Activated T-helper 1 cell treated with anti-CD3 and anti-CD28 coated beads, Interleukin-12 subunit alpha, Interleukin-12 subunit beta, Interleukin-2, Interleukin-4 antibody, amounts not matched to agents 30 ng/mL and 10 ng/mL and 1 ng/mL, durations not matched to agents 14 hours and 24 hours and 36 hours (primary cell): ENCODE measurements at regions of chr11 and their contacts with region 1.

Region 1: DNA sequence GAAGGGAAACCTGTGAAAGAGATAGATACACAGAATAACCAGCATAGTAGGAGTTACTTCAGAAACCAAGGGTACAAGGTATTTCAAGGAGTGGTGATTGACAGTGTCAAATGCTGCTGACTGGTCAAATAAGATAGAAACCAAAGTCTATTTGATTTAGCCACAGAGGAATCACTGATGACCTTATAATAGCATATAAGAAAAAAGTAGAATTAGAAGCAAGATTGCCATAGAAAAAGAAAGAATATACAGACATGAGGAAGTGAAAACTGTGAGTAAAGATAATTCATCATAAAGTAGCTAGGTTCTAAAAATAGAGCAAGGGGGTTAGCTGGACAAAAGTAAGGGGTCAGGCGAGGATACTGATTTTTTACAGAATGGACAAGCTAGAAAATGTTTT is 14.2 kb downstream of the ZBTB44 start:
- DNase-seq: no peak
- H3K4me3 Mint-ChIP-seq: no peak overlapping the region
- H3K27ac Mint-ChIP-seq: no peak overlapping the region
- H3K4me1 Mint-ChIP-seq: peaks cover 30% of the 10 kb centered on the region
- H3K27me3 Mint-ChIP-seq: no peaks in the 10 kb centered on the region

Region 2: GRCh38 chr11:130198639-130199363 is 101.8 kb before region 1 on chr11:
- intact Hi-C with region 1: no loop called
- DNase-seq: no peak
- H3K4me3 Mint-ChIP-seq: no peak overlapping the region
- H3K27ac Mint-ChIP-seq: no peak overlapping the region
- H3K4me1 Mint-ChIP-seq: no peaks in the 10 kb centered on the region
- H3K27me3 Mint-ChIP-seq: no peaks in the 10 kb centered on the region

Region 3: DNA sequence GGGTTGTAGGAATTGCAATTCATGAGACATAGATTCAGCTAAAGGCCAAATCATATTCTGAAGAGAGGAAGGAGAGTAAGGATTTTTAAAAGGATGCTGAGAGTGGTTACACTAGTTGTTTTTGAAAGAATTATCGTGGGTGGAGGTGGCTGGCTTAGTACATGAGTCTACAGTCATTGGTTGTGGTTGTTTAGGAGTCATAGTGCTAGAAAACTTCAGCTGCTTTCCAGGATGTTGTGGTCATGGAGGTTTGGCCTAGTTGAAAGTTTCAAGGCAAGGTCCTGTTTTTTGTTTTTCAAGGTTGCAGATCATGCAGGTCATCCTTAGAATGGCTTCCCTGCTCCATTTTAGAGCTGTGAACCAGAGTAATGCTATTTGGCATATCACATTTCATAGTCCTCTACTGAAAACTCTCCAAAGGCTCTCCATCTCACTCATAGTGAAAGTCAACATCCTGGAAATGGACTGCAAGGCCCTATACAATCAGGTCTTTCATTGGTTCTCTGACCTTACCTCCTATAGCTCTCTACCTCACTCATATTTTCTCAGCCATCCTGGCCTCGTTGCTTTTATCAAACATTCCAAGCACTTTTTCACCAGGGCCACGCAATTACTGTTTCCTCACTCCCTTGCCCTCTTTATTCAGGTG is 40.2 kb after region 1 on chr11:
- intact Hi-C with region 1: loop called (anchors 5 kb)
- DNase-seq: peak; percentile 59
- H3K4me3 Mint-ChIP-seq: no peak overlapping the region
- H3K27ac Mint-ChIP-seq: peak overlapping the region; percentile 83
- H3K4me1 Mint-ChIP-seq: peaks cover 25% of the 10 kb centered on the region
- H3K27me3 Mint-ChIP-seq: no peaks in the 10 kb centered on the region